SK-N-SH (cell line): ENCODE measurements at regions of chr3 and their contacts with region 1.

Region 1: DNA sequence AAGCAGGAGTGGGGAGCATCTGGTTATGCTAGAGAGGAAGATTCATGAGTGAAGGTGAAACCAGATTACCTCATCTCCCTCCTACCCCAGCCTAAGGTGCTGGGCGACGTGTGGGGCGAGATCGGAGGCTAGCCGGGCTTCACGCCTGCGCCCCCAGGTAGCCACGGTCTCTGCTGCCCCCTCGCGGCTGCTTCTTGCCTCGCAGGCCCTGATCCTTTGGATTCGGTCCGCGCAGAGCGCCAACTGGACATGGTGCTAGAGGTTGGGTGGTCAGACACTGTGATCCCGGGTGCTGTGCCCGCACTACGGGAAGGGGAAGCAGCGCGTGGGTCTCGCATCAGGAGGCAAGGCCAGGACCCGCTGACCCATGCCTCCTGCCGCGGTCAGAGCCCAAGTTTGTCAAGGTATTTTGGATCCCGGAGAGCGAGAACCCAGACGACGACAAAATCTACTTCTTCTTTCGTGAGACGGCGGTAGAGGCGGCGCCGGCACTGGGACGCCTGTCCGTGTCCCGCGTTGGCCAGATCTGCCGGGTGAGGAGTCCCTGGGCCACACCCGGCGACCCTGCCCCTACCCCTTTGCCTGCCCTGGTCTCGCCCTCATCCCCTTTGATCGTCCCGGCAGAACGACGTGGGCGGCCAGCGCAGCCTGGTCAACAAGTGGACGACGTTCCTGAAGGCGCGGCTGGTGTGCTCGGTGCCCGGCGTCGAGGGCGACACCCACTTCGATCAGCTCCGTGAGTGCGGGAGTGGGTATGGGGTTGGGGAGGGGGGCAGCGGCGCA is 4.2 kb downstream of the SEMA3B start:
- DNase-seq: peak; percentile 98
- H3K4me3 ChIP-seq: peak overlapping the region; percentile 25 to 59; a peak in 3 of 4 replicates
- H3K27ac ChIP-seq: no peak overlapping the region
- H3K4me1 ChIP-seq: peaks cover 11 to 19% of the 10 kb centered on the region in 2 experiments; a peak in 2 of 4 replicates
- H3K27me3 ChIP-seq: 0 out of 2 replicates have a peak, but pooled peaks cover 16% of the 10 kb centered on the region
- CTCF ChIP-seq: peak; percentile 91
- EP300 ChIP-seq: no peak
- RAD21 ChIP-seq: peak; percentile 99

Region 2: DNA sequence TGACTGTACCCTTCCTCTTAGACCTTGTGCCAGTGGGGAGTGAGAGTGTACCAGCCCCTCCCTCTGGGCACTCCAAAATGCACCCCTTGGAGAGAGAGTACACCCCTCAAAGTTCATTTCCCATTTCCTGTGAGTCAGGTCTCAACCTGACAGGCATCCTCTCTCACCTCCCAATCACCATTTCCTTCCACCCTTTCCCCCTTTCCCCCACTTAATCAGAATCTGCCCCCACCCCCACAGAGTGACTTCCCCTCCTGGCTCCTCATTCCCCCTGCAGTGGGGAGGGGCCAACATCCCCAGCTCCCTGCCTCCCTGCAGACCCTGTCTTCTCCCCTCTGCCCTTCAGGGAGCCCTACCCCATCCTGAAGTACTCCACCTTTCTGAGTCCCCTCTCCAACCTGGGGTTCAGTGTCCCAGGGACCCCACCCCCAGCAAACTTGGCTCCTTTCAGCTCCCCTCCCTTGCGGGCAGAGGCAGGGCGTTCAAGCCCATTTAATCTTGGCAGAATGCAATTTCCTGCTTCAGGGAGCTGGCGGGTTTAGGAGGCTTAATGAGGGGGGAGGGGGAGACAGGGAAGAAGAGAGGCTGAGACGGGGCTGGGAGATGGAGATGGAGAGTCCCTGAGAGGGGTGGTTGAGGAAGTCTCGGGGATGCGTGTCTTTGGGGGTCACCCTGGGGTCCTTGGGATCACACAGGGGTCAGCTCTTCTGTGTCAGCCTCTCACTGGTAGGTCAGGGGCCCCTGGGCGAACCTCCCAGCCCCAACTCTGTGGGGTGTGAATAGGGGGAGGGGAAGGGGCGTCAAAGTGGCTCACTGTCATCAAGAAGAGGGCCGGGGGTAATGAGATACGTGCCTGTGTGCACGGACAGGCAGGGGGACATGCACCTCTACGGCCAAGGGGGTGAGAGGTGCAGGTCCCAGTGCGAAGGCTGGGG is 134.6 kb before region 1 on chr3:
- CTCF ChIA-PET with region 1: no interaction called
- POLR2A ChIA-PET with region 1: no interaction called
- DNase-seq: peak; percentile 51
- H3K4me3 ChIP-seq: no peak overlapping the region; a peak in 1 of 4 replicates
- H3K27ac ChIP-seq: no peak overlapping the region
- H3K4me1 ChIP-seq: peaks cover 14 to 43% of the 10 kb centered on the region in 2 experiments; a peak in 3 of 4 replicates
- H3K27me3 ChIP-seq: no peaks in the 10 kb centered on the region
- CTCF ChIP-seq: no peak
- EP300 ChIP-seq: no peak
- RAD21 ChIP-seq: no peak

Region 3: GRCh38 chr3:50192689-50193141 is 80.4 kb before region 1 on chr3:
- CTCF ChIA-PET with region 1: interaction called, 206 read pairs
- POLR2A ChIA-PET with region 1: no interaction called
- DNase-seq: peak; percentile 88
- H3K4me3 ChIP-seq: peak overlapping the region in 1 of 2 experiments; percentile 21; a peak in 1 of 4 replicates
- H3K27ac ChIP-seq: no peak overlapping the region
- H3K4me1 ChIP-seq: peaks cover 0 to 19% of the 10 kb centered on the region in 2 experiments; a peak in 1 of 4 replicates
- H3K27me3 ChIP-seq: peaks cover 33% of the 10 kb centered on the region
- CTCF ChIP-seq: peak; percentile 90
- EP300 ChIP-seq: no peak
- RAD21 ChIP-seq: peak; percentile 89

Region 4: GRCh38 chr3:50221411-50222168 is 51.5 kb before region 1 on chr3:
- CTCF ChIA-PET with region 1: interaction called, 91 read pairs
- POLR2A ChIA-PET with region 1: no interaction called
- DNase-seq: no peak
- H3K4me3 ChIP-seq: no peak overlapping the region
- H3K27ac ChIP-seq: no peak overlapping the region
- H3K4me1 ChIP-seq: no peaks in the 10 kb centered on the region; a peak in 1 of 4 replicates
- H3K27me3 ChIP-seq: peaks cover 7% of the 10 kb centered on the region; the same call in 1 of the 2 replicates
- CTCF ChIP-seq: no peak
- EP300 ChIP-seq: no peak
- RAD21 ChIP-seq: no peak

Region 5: GRCh38 chr3:50245831-50246516 is 27.1 kb before region 1 on chr3:
- CTCF ChIA-PET with region 1: interaction called, 17 read pairs
- POLR2A ChIA-PET with region 1: no interaction called
- DNase-seq: peak; percentile 95
- H3K4me3 ChIP-seq: peak overlapping the region; percentile 46 to 57
- H3K27ac ChIP-seq: peak overlapping the region; percentile 72 to 89
- H3K4me1 ChIP-seq: peaks cover 35 to 36% of the 10 kb centered on the region in 2 experiments; a peak in 3 of 4 replicates
- H3K27me3 ChIP-seq: no peaks in the 10 kb centered on the region
- CTCF ChIP-seq: peak; percentile 97
- EP300 ChIP-seq: no peak
- RAD21 ChIP-seq: peak; percentile 73

Region 6: DNA sequence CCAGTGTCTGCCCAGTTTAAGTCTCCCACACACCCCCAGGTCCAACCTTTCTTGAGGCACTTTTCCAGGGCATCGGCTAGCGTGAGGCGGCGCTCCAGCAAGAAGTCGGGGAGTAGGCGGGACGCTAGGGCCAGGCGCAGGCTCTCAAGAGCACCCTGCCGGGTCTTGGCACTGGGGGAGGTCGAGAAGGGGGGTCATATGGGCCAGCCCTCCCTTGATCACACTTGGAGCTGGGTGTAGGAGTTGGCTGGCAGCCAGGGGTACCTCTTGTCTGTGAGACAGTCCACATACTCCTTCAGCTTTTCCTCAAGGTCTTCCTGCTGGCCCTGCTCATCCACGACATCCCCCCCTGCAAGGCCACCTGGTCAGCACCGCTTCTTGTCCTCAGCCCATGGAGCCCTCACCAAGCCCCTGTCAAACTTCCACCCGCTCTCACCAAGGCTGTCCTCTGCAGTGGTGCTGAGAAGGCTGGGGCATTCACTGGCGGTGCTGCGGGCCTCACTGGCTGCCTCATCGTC is 17.1 kb after region 1 on chr3:
- CTCF ChIA-PET with region 1: interaction called, 11 read pairs
- POLR2A ChIA-PET with region 1: no interaction called
- DNase-seq: no peak
- H3K4me3 ChIP-seq: no peak overlapping the region
- H3K27ac ChIP-seq: no peak overlapping the region
- H3K4me1 ChIP-seq: peaks cover 3 to 16% of the 10 kb centered on the region in 2 experiments; a peak in 2 of 4 replicates
- H3K27me3 ChIP-seq: no peaks in the 10 kb centered on the region
- CTCF ChIP-seq: no peak
- EP300 ChIP-seq: no peak
- RAD21 ChIP-seq: no peak